CD4-positive, alpha-beta memory T cell (primary cell): ENCODE measurements at regions of chr3 and their contacts with region 1.

Region 1: GRCh38 chr3:15427182-15427880 is at the starts of genes EAF1 and METTL6:
- DNase-seq: peak; percentile 81 to 87 (median 83)
- H3K4me3 ChIP-seq: peak within 1 kb of the TSS; percentile 99
- H3K4me3 Mint-ChIP-seq: peak within 1 kb of the TSS; percentile 88 to 99 (median 98)
- H3K27ac ChIP-seq: peak within 1 kb of the TSS; percentile 89
- H3K27ac Mint-ChIP-seq: peak within 1 kb of the TSS; percentile 83 to 98 (median 97)
- H3K4me1 ChIP-seq: peaks cover 52% of the 10 kb centered on the region
- H3K4me1 Mint-ChIP-seq: peaks cover 32 to 80% (median 59%) of the 10 kb centered on the region in 4 donors
- H3K27me3 ChIP-seq: no peaks in the 10 kb centered on the region
- H3K27me3 Mint-ChIP-seq: no peaks in the 10 kb centered on the region
- total RNA-seq, gene EAF1: 17.6 to 19.7 TPM
- total RNA-seq, gene METTL6: 17.3 to 17.4 TPM

Region 2: GRCh38 chr3:15356186-15356585 is 71.1 kb before region 1 on chr3:
- CTCF ChIA-PET with region 1: no interaction called
- POLR2A ChIA-PET with region 1: no interaction called
- intact Hi-C with region 1: no loop called
- DNase-seq: no peak
- H3K4me3 ChIP-seq: peak overlapping the region in 1 of 2 donors; percentile 49
- H3K4me3 Mint-ChIP-seq: peak overlapping the region; percentile 62 to 91 (median 80)
- H3K27ac ChIP-seq: peak overlapping the region; percentile 72
- H3K27ac Mint-ChIP-seq: peak overlapping the region; percentile 90 to 99 (median 97)
- H3K4me1 ChIP-seq: peaks cover 67% of the 10 kb centered on the region
- H3K4me1 Mint-ChIP-seq: peaks cover 30 to 58% (median 46%) of the 10 kb centered on the region in 4 donors
- H3K27me3 ChIP-seq: no peaks in the 10 kb centered on the region
- H3K27me3 Mint-ChIP-seq: no peaks in the 10 kb centered on the region

Region 3: GRCh38 chr3:15527031-15527459 is 99.7 kb after region 1 on chr3:
- CTCF ChIA-PET with region 1: no interaction called
- POLR2A ChIA-PET with region 1: no interaction called
- intact Hi-C with region 1: no loop called
- DNase-seq: no peak
- H3K4me3 ChIP-seq: no peak overlapping the region
- H3K4me3 Mint-ChIP-seq: no peak overlapping the region
- H3K27ac ChIP-seq: no peak overlapping the region
- H3K27ac Mint-ChIP-seq: peak overlapping the region in 3 of 7 donors; percentile 12 to 68 (median 32)
- H3K4me1 ChIP-seq: peaks cover 39% of the 10 kb centered on the region
- H3K4me1 Mint-ChIP-seq: peaks cover 28 to 44% (median 37%) of the 10 kb centered on the region in 4 donors
- H3K27me3 ChIP-seq: no peaks in the 10 kb centered on the region
- H3K27me3 Mint-ChIP-seq: no peaks in the 10 kb centered on the region

Region 4: DNA sequence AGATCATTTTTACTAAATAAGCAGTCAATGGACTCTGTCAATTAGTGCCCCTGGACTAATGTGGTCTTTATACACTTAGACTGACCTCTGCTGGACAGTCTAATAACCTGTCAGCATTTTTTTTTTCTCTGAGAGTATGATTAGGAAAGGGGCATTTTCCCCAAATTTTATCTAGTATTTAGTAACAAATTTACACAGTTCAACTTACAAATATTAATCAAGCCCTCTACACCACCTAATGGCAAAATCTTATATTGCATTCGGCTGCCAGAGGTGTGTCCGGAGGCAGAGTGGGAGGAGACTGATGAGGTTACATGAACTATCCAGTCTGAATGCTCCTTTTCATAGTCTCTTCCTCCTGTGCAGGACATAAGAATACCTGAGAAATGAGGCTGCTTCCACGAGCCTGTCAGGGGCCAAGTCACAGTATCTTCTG is 130.2 kb after region 1 on chr3:
- CTCF ChIA-PET with region 1: interaction called, 6 read pairs
- POLR2A ChIA-PET with region 1: no interaction called
- intact Hi-C with region 1: loop called (anchors 1 kb)
- DNase-seq: peak; percentile 67 to 82 (median 79)
- H3K4me3 ChIP-seq: no peak overlapping the region
- H3K4me3 Mint-ChIP-seq: peak overlapping the region in 2 of 8 donors; percentile 9 to 59
- H3K27ac ChIP-seq: no peak overlapping the region
- H3K27ac Mint-ChIP-seq: peak overlapping the region; percentile 5 to 75 (median 62)
- H3K4me1 ChIP-seq: peaks cover 19% of the 10 kb centered on the region
- H3K4me1 Mint-ChIP-seq: peaks cover 17 to 23% (median 20%) of the 10 kb centered on the region in 4 donors
- H3K27me3 ChIP-seq: no peaks in the 10 kb centered on the region
- H3K27me3 Mint-ChIP-seq: no peaks in the 10 kb centered on the region

Region 5: GRCh38 chr3:15682561-15683185 is 255.3 kb after region 1 on chr3:
- CTCF ChIA-PET with region 1: no interaction called
- POLR2A ChIA-PET with region 1: no interaction called
- intact Hi-C with region 1: no loop called
- DNase-seq: no peak
- H3K4me3 ChIP-seq: no peak overlapping the region
- H3K4me3 Mint-ChIP-seq: no peak overlapping the region
- H3K27ac ChIP-seq: no peak overlapping the region
- H3K27ac Mint-ChIP-seq: no peak overlapping the region
- H3K4me1 ChIP-seq: no peaks in the 10 kb centered on the region
- H3K4me1 Mint-ChIP-seq: peaks cover 0 to 7% (median 5%) of the 10 kb centered on the region in 4 donors
- H3K27me3 ChIP-seq: no peaks in the 10 kb centered on the region
- H3K27me3 Mint-ChIP-seq: no peaks in the 10 kb centered on the region

Region 6: GRCh38 chr3:15859507-15860013 is 432.2 kb after region 1 on chr3:
- CTCF ChIA-PET with region 1: no interaction called
- POLR2A ChIA-PET with region 1: no interaction called
- intact Hi-C with region 1: loop called (anchors 1 kb)
- DNase-seq: peak; percentile 70 to 80 (median 77)
- H3K4me3 ChIP-seq: peak overlapping the region in 1 of 2 donors; percentile 71
- H3K4me3 Mint-ChIP-seq: peak overlapping the region; percentile 70 to 100 (median 94)
- H3K27ac ChIP-seq: peak overlapping the region; percentile 63
- H3K27ac Mint-ChIP-seq: peak overlapping the region; percentile 88 to 96 (median 94)
- H3K4me1 ChIP-seq: peaks cover 20% of the 10 kb centered on the region
- H3K4me1 Mint-ChIP-seq: peaks cover 16 to 52% (median 29%) of the 10 kb centered on the region in 4 donors
- H3K27me3 ChIP-seq: no peaks in the 10 kb centered on the region
- H3K27me3 Mint-ChIP-seq: no peaks in the 10 kb centered on the region

Region 7: DNA sequence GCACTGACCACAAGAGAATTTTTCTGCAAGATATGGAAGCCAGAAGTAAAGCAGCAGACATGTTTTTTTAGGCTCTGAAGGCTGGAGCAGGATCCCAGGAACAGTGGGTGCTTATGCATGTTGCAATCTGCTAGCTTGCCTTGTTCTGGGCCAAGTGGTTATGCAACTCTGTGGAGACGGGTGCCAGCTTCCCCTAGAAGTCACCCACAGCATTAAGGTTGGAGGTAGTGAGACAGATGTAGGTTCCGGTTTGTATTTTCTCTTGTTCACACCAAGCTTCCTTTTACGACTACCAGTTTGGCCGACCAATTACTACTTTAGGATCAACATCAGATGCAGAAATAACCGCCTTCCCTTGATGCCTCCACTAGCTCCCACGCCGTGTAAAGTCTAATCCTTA is 826.3 kb after region 1 on chr3:
- CTCF ChIA-PET with region 1: no interaction called
- POLR2A ChIA-PET with region 1: no interaction called
- intact Hi-C with region 1: no loop called
- DNase-seq: no peak
- H3K4me3 ChIP-seq: no peak overlapping the region
- H3K4me3 Mint-ChIP-seq: no peak overlapping the region
- H3K27ac ChIP-seq: no peak overlapping the region
- H3K27ac Mint-ChIP-seq: no peak overlapping the region
- H3K4me1 ChIP-seq: peaks cover 3% of the 10 kb centered on the region
- H3K4me1 Mint-ChIP-seq: peaks cover 0 to 4% (median 0%) of the 10 kb centered on the region in 4 donors
- H3K27me3 ChIP-seq: no peaks in the 10 kb centered on the region
- H3K27me3 Mint-ChIP-seq: no peaks in the 10 kb centered on the region